Activated CD4-positive, alpha-beta T cell treated with anti-CD3 and anti-CD28 coated beads for 36 hours (primary cell): ENCODE measurements at regions of chr12 and their contacts with region 1.

Region 1: GRCh38 chr12:15276088-15276698 is 46.1 kb upstream of the PTPRO start:
- DNase-seq: no peak
- ATAC-seq: no peak
- H3K4me3 Mint-ChIP-seq: no peak overlapping the region
- H3K27ac Mint-ChIP-seq: no peak overlapping the region
- H3K4me1 Mint-ChIP-seq: peaks cover 7% of the 10 kb centered on the region
- H3K27me3 Mint-ChIP-seq: peaks cover 4% of the 10 kb centered on the region

Region 2: GRCh38 chr12:14681625-14682024 is 594.6 kb before region 1 on chr12:
- CTCF ChIA-PET with region 1: no interaction called
- POLR2A ChIA-PET with region 1: no interaction called
- intact Hi-C with region 1: no loop called
- DNase-seq: no peak
- ATAC-seq: peak; percentile 80
- H3K4me3 Mint-ChIP-seq: no peak overlapping the region
- H3K27ac Mint-ChIP-seq: no peak overlapping the region
- H3K4me1 Mint-ChIP-seq: peaks cover 18% of the 10 kb centered on the region
- H3K27me3 Mint-ChIP-seq: no peaks in the 10 kb centered on the region

Region 3: DNA sequence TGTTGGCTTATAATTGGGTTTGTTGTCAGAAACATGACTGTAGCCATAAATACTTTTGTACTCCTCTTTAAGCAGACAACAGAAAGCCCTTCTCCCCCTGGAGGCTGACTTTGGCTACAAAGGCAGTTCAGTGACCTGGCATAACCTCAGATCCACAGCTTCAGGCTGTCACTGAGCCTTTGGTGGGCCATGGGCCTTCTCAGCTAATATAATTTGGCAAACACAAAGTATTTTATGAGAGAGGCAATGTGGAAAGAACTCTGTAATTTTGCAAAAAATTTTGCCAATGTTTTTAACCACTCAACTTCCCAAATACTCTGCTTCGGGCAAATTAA is 375.0 kb before region 1 on chr12:
- CTCF ChIA-PET with region 1: no interaction called
- POLR2A ChIA-PET with region 1: no interaction called
- intact Hi-C with region 1: no loop called
- DNase-seq: no peak
- ATAC-seq: no peak
- H3K4me3 Mint-ChIP-seq: no peak overlapping the region
- H3K27ac Mint-ChIP-seq: no peak overlapping the region
- H3K4me1 Mint-ChIP-seq: peaks cover 13% of the 10 kb centered on the region
- H3K27me3 Mint-ChIP-seq: no peaks in the 10 kb centered on the region

Region 4: DNA sequence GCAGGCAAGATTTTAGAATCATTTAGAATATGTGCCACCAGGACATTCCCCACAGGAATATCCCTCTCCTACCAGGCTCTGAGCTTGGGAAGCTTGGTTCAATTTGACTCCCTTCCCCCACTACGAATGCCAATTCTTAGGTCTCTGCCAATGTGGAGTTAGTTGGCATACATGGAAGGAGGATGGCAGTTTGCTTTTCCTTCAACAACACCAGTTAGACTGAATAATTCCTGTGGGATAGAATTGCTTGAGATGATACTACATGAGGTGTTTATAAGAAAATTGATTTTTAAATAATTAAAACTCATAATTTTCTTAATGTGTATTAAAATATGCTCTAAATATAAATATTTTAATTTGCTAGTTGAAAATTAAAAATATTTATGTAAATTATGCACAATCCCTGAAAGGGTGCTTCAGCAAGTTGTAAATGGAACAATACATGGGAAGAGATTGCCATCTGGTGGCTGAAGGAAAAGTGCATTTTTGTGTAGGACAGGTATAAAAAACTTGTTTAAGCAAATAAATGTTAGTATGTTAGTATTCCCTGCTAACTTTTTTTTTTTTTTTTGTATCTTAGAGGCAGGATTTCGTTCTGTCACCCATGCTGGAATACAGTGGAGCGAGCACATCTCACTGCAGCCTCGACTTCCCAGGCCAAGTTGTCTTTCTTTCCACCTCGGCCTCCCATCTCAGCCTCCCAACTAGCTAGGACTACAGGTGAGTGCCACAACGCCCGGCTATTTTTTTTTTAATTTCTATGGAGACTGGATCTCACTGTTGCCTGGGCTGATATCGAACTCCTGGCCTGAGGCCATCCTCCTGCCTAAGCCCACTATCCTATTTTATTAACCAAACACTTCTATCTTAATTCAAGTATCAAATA is 580.1 kb after region 1 on chr12:
- CTCF ChIA-PET with region 1: interaction called, 3 read pairs
- POLR2A ChIA-PET with region 1: no interaction called
- intact Hi-C with region 1: loop called (anchors 2 to 5 kb)
- DNase-seq: peak; percentile 50
- ATAC-seq: no peak
- H3K4me3 Mint-ChIP-seq: no peak overlapping the region
- H3K27ac Mint-ChIP-seq: no peak overlapping the region
- H3K4me1 Mint-ChIP-seq: no peaks in the 10 kb centered on the region
- H3K27me3 Mint-ChIP-seq: peaks cover 3% of the 10 kb centered on the region